Gastrocnemius medialis (tissue), 4 donors: ENCODE measurements at regions of chr12 and their contacts with region 1.

Region 1: DNA sequence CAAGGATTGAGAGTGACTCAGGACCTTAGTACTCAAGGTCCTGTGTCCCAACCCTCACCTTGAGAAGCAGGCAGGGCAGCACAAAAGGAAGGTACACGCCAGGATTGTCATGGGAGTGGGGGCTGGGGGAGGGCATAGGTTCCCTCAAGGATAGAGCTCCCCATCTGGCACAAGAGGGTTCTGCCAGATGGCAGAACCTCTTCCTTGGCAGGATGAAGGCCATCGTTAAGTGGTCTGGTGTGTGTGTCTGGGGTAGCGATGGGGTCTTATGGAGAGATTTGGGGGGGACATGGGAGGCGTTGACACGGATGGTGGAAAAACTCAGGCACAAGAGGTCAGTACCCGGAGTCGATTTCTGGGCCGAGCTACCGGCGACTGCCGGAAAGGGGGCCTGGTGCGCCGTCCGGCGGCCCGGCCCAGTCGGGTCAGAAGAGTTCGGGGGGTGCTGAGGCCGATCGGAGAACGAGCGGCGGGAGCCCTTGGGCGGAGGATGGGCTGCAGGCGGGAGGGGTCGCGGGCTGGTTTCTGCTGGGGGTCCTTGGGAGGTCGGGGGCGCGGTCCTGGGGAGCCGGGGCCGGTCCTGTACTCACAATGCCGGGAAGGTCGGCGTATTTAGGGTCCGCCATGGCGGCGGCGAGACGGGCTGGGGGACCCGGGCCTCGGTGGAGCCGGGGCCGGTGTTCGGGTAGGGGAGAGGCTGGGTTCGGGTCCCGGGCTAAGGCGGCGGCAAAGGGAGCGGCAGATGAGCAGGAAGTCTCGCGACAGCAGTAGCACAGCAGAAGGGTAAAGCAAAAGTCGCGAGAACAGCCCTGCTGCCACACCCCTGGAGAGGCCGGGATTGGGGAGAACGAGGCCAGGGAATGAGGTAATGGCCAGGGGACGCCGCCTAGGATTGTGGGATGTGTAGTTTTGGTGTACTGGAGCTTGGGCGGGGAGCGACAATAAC is at the start of gene DCTN2:
- DNase-seq: peak; percentile 96 to 97
- ATAC-seq: peak; percentile 95 to 98
- H3K4me3 ChIP-seq: peak within 1 kb of the TSS; percentile 76 to 95 (median 91)
- H3K27ac ChIP-seq: peak within 1 kb of the TSS; percentile 87 to 94 (median 91)
- H3K4me1 ChIP-seq: peaks cover 18 to 19% of the 10 kb centered on the region in 2 donors
- H3K27me3 ChIP-seq: peaks cover 18 to 31% (median 21%) of the 10 kb centered on the region in 3 donors
- CTCF ChIP-seq: peak in 1 of 5 experiments; percentile 11
- POLR2A ChIP-seq: peak; percentile 48 to 57
- total RNA-seq, gene DCTN2: 147 to 265 (median 177) TPM

Region 2: GRCh38 chr12:57389033-57389432 is 157.7 kb before region 1 on chr12:
- in situ Hi-C with region 1: no loop called
- intact Hi-C with region 1: no loop called
- DNase-seq: no peak
- ATAC-seq: peak in 1 of 2 donors; percentile 53
- H3K4me3 ChIP-seq: no peak overlapping the region
- H3K27ac ChIP-seq: no peak overlapping the region
- H3K4me1 ChIP-seq: peaks cover 6 to 12% of the 10 kb centered on the region in 2 donors
- H3K27me3 ChIP-seq: no peaks in the 10 kb centered on the region
- CTCF ChIP-seq: no peak
- POLR2A ChIP-seq: no peak

Region 3: GRCh38 chr12:57487597-57488401 is 58.9 kb before region 1 on chr12 and contains the start of gene MARS1:
- in situ Hi-C with region 1: no loop called
- intact Hi-C with region 1: loop called (anchors 2 kb)
- DNase-seq: peak; percentile 94 to 96
- ATAC-seq: peak; percentile 100
- H3K4me3 ChIP-seq: peak within 1 kb of the TSS; percentile 74 to 95 (median 76)
- H3K27ac ChIP-seq: peak within 1 kb of the TSS; percentile 83 to 86 (median 84)
- H3K4me1 ChIP-seq: peaks cover 10 to 13% of the 10 kb centered on the region in 2 donors
- H3K27me3 ChIP-seq: no peaks in the 10 kb centered on the region
- CTCF ChIP-seq: no peak
- POLR2A ChIP-seq: peak; percentile 47 to 73
- total RNA-seq, gene MARS1: 37.7 to 81.1 (median 42.0) TPM